ENCODE measurements at regions of chr16 and their contacts with region 1.

Region 1: DNA sequence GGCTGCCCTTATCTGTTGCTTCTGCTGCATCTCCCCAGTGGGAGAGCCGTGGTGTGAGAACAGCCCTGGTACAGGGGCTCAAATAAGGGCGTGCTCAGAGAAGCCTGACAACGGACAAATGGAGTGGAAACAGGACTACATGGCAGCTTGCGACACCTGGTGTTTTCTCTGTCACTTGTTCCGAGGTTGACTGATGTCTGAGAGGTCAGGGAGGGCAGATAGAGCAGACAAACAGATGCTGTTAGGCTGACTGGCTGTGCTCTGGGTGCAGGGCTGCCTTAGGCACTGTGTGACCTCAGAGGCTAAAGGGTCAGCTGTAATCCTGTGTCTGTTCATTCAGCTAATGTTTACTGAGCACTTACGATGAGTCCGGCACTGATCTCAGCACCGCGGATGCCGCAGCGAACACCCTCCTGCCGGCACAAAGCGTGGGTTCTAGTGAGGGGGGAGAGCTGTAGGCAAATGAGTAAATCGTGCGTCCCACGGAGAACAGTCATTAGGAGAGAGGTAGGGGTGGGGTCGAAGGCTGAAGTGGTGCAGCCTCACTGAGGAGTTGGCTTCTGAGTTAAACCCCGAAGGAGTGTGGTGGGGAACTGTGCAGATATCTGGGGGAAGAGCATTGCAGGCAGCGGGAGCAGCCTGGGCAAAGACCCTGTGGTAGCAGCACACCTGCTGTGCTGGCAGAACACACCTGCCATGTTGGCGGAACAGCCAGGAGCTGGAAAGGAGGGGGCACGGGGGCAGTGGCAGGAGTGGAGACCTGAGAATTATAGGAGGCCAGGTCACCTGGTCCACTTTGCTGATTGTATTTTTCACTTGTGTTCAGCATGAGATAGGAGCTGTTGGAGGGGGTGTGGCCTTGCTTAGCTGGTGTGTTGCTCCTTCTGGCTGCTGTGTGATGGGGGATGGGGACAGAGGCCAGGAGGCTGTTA is 35.0 kb downstream of the GPT2 start:
- DNase-seq: no peak
- H3K27ac ChIP-seq: peak overlapping the region; percentile 19
- CTCF ChIP-seq: no peak

Region 2: GRCh38 chr16:46883690-46884512 is 35.2 kb before region 1 on chr16 and contains the start of gene GPT2:
- CTCF ChIA-PET with region 1: no interaction called
- POLR2A ChIA-PET with region 1: no interaction called
- DNase-seq: peak; percentile 89
- H3K27ac ChIP-seq: peak within 1 kb of the TSS; percentile 86
- CTCF ChIP-seq: no peak

Region 3: GRCh38 chr16:46899443-46900143 is 19.5 kb before region 1 on chr16:
- CTCF ChIA-PET with region 1: no interaction called
- POLR2A ChIA-PET with region 1: no interaction called
- DNase-seq: no peak
- H3K27ac ChIP-seq: peak overlapping the region; percentile 13
- CTCF ChIP-seq: no peak

Region 4: DNA sequence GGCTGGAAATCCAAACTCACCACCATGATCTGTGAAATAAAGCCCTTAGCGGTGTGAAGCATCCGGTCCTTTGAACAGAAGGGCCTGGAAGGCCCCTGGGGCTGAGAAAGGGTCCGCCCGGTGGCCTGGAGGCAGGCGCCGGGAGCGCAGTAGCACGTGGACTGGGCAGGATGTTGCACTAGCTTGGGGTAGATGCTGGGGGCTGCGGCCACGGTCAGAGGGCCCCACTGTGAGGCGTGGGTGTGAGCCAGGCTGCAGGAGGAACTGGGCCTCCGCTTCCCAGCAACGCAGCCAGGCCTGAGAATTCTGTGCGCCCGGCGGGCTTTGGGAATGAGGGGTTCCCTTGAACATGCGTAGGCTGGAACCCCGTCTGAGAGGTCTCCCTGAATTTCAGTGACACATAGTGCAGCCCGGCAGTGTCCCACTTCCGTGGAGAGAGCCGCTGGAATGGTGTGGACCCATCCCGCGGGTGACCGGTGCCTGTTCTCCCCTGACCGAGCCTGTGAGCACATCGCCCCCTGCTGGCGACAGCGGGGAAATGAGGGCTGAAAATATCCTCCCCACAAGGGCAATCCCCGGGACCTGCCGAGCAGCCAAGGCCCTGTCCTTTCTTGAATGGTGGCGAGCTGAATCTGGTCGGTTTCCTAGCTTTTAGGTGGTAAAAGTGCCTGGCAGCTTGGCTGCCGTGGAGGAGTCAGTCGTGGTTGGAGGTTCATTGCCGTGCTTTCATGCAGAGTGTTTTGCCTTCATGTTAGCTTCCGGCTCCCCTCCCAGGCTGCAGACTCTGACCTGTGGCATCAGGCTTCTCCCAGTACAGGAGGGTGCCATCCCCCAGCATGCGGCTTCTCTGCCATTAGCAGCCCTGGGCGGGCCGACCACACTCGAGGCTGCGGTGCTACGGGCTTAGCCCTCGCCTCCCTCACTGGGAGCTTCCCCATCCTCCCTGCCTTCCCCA is 10.5 kb after region 1 on chr16:
- CTCF ChIA-PET with region 1: interaction called, 16 read pairs
- POLR2A ChIA-PET with region 1: no interaction called
- DNase-seq: peak; percentile 68
- H3K27ac ChIP-seq: 0 out of 2 replicates have a peak overlapping the region, but pooled peaks have one; percentile 5
- CTCF ChIP-seq: peak; percentile 88

Region 5: GRCh38 chr16:47018223-47018891 is 99.2 kb after region 1 on chr16:
- CTCF ChIA-PET with region 1: no interaction called
- POLR2A ChIA-PET with region 1: no interaction called
- DNase-seq: peak; percentile 67
- H3K27ac ChIP-seq: no peak overlapping the region
- CTCF ChIP-seq: peak; percentile 39; the same call in 1 of the 2 replicates

Measured in RWPE1 (cell line).